Mammary epithelial cell (primary cell): ENCODE measurements at regions of chr2 and their contacts with region 1.

Region 1: GRCh38 chr2:240851078-240851991 is 17.3 kb upstream of the AGXT start:
- DNase-seq: peak; percentile 52
- H3K4me3 ChIP-seq: no peak overlapping the region
- H3K27ac ChIP-seq: no peak overlapping the region
- H3K4me1 ChIP-seq: no peaks in the 10 kb centered on the region
- H3K27me3 ChIP-seq: peaks cover 2% of the 10 kb centered on the region
- CTCF ChIP-seq: peak; percentile 90 to 98

Region 2: GRCh38 chr2:240796543-240797499 is 54.5 kb before region 1 on chr2:
- CTCF ChIA-PET with region 1: no interaction called
- dilution Hi-C with region 1: loop called (anchors 5 kb)
- in situ Hi-C with region 1: no loop called
- intact Hi-C with region 1: no loop called
- DNase-seq: no peak
- H3K4me3 ChIP-seq: no peak overlapping the region
- H3K27ac ChIP-seq: no peak overlapping the region
- H3K4me1 ChIP-seq: no peaks in the 10 kb centered on the region
- H3K27me3 ChIP-seq: peaks cover 18% of the 10 kb centered on the region
- CTCF ChIP-seq: no peak

Region 3: GRCh38 chr2:240819858-240820606 is 31.3 kb before region 1 on chr2 and contains the start of gene KIF1A:
- CTCF ChIA-PET with region 1: no interaction called
- dilution Hi-C with region 1: no loop called
- in situ Hi-C with region 1: no loop called
- intact Hi-C with region 1: no loop called
- DNase-seq: no peak
- H3K4me3 ChIP-seq: no peak within 1 kb of the TSS
- H3K27ac ChIP-seq: no peak within 1 kb of the TSS
- H3K4me1 ChIP-seq: no peaks in the 10 kb centered on the region
- H3K27me3 ChIP-seq: peaks cover 32% of the 10 kb centered on the region
- CTCF ChIP-seq: no peak
- total RNA-seq, gene KIF1A: under 0.01 TPM in 1 of 2 donors, not detected in the other

Region 4: GRCh38 chr2:240884221-240884620 is 32.9 kb after region 1 on chr2:
- CTCF ChIA-PET with region 1: no interaction called
- dilution Hi-C with region 1: no loop called
- in situ Hi-C with region 1: no loop called
- intact Hi-C with region 1: no loop called
- DNase-seq: no peak
- H3K4me3 ChIP-seq: no peak overlapping the region
- H3K27ac ChIP-seq: no peak overlapping the region
- H3K4me1 ChIP-seq: no peaks in the 10 kb centered on the region
- H3K27me3 ChIP-seq: no peaks in the 10 kb centered on the region
- CTCF ChIP-seq: no peak

Region 5: DNA sequence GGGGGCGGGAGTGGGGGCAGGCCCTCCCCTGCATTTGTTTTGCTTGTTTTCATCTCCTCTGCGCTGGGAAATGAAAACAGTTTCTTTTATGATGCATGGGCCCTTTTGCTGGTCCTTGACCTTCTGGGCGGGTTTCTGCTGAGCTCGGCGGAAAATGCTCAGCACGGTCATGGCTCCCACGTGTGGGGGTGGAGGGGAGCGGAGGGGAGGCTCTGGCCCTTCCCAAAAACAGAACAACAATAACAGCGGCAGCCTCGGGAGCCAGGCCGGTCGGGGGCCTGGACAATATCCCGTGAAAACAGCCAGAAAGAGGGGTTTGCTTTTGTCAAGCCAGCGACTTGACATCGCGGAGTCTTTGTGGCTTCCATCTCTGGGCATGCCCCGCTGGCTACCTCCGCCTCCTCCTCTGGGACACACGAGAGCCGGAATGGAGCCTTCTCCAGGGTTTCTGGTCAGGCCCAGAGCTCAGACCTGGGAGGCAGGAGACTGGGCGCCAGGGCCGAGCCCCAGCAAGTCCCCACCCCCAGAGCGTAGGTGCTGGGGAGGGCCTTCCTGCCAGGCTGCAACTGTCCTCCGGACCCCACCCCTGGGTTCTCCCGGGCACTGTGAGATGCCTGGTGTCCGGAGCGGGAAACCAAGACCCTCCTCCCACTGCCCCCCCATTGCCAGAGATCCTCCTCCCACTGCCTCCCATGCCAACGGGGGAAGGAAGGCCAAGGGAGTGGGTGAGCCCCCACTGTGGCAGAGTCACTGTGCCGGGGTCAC is 111.1 kb after region 1 on chr2:
- CTCF ChIA-PET with region 1: no interaction called
- dilution Hi-C with region 1: no loop called
- in situ Hi-C with region 1: no loop called
- intact Hi-C with region 1: no loop called
- DNase-seq: no peak
- H3K4me3 ChIP-seq: no peak overlapping the region
- H3K27ac ChIP-seq: no peak overlapping the region
- H3K4me1 ChIP-seq: no peaks in the 10 kb centered on the region
- H3K27me3 ChIP-seq: peaks cover 7% of the 10 kb centered on the region
- CTCF ChIP-seq: no peak

Region 6: DNA sequence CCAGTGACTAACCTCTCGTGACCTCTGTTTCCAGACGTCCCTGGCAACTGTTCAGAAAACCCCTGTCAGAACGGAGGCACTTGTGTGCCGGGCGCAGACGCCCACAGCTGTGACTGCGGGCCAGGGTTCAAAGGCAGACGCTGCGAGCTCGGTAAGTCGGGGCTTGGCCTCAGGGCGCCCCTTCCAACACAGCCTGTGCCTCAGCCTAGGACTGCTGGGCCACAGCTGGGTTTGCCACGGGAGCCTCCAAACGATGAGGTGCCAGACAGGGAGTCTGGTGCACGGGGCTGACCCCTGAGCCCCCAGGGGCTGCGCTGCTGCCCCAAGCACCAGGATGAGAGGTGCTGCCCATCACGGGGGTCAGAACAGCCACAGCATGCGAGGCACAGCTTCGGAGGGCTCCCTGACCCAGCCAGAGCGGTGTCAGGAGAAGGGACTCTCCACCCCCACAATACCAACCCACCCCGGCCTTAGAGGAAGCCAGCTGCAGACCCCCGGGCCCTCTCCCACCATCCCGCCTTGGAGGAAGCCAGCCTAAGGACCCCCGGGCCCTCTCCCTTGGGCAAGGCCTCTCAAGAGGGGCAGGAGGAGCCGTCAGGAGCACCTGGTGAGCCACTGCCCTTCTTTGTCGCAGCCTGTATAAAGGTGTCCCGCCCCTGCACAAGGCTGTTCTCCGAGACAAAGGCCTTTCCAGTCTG is 230.5 kb after region 1 on chr2:
- CTCF ChIA-PET with region 1: no interaction called
- dilution Hi-C with region 1: loop called (anchors 5 kb)
- in situ Hi-C with region 1: no loop called
- intact Hi-C with region 1: loop called (anchors 2 kb)
- DNase-seq: no peak
- H3K4me3 ChIP-seq: no peak overlapping the region
- H3K27ac ChIP-seq: no peak overlapping the region
- H3K4me1 ChIP-seq: no peaks in the 10 kb centered on the region
- H3K27me3 ChIP-seq: no peaks in the 10 kb centered on the region
- CTCF ChIP-seq: no peak

Region 7: GRCh38 chr2:241226723-241227572 is 375.6 kb after region 1 on chr2:
- CTCF ChIA-PET with region 1: no interaction called
- dilution Hi-C with region 1: loop called (anchors 5 kb)
- in situ Hi-C with region 1: loop called in 1 of 2 experiments (anchors 25 kb)
- intact Hi-C with region 1: no loop called
- DNase-seq: no peak
- H3K4me3 ChIP-seq: no peak overlapping the region
- H3K27ac ChIP-seq: no peak overlapping the region
- H3K4me1 ChIP-seq: peaks cover 15% of the 10 kb centered on the region
- H3K27me3 ChIP-seq: no peaks in the 10 kb centered on the region
- CTCF ChIP-seq: no peak

Region 8: GRCh38 chr2:241598480-241598879 is 747.1 kb after region 1 on chr2:
- CTCF ChIA-PET with region 1: no interaction called
- dilution Hi-C with region 1: no loop called
- in situ Hi-C with region 1: no loop called
- intact Hi-C with region 1: loop called (anchors 2 kb)
- DNase-seq: peak; percentile 11
- H3K4me3 ChIP-seq: no peak overlapping the region
- H3K27ac ChIP-seq: no peak overlapping the region
- H3K4me1 ChIP-seq: no peaks in the 10 kb centered on the region
- H3K27me3 ChIP-seq: no peaks in the 10 kb centered on the region
- CTCF ChIP-seq: peak; percentile 22 to 51

Region 9: DNA sequence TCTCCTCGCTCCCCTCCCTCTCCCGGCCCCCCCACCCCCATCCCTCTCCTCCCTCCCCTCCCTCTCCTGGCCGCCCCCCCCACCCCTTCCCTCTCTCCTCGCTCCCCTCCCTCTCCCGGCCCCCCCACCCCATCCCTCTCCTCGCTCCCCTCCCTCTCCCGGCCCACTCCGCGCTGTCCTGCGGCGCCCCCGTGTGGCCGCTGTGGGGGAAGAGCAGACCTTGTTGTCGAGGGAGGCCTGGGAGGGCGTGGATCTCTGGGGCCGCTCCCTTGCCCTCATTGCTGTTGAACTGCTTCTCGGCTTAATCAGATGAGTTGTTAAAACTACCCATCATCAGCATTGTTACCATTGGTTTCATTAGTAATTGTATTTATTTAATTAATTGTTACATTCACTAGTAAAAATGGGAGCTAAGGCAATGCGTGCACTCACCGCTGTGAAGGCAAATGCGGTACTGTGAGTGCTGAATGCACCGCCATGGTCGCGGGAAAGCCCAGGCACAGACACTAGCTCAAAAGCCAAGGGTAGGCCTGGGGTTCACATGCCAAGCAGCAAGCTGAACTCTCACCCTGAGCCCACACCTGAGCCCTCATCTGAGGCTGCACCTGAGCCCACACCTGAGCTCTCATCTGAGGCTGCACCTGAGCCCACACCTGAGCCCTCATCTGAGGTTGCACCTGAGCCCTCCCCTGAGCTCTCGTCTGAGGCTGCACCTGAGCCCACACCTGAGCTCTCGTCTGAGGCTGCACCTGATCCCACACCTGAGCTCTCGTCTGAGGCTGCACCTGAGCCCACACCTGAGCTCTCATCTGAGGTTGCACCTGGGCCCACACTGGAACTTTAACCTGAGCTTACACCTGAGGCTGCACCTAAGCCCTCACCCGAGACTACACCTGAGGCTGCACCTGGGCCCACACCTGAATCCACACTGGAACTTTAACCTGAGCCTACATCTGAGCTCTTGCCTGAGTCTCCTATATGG is 1026.9 kb after region 1 on chr2:
- CTCF ChIA-PET with region 1: no interaction called
- dilution Hi-C with region 1: no loop called
- in situ Hi-C with region 1: no loop called
- intact Hi-C with region 1: loop called (anchors 1 kb)
- DNase-seq: peak; percentile 41
- H3K4me3 ChIP-seq: no peak overlapping the region
- H3K27ac ChIP-seq: no peak overlapping the region
- H3K4me1 ChIP-seq: peaks cover 15% of the 10 kb centered on the region
- H3K27me3 ChIP-seq: no peaks in the 10 kb centered on the region
- CTCF ChIP-seq: peak; percentile 37 to 77